Right ventricle myocardium inferior (tissue), 1 donor: ENCODE measurements at regions of chr10 and their contacts with region 1.

Region 1: DNA sequence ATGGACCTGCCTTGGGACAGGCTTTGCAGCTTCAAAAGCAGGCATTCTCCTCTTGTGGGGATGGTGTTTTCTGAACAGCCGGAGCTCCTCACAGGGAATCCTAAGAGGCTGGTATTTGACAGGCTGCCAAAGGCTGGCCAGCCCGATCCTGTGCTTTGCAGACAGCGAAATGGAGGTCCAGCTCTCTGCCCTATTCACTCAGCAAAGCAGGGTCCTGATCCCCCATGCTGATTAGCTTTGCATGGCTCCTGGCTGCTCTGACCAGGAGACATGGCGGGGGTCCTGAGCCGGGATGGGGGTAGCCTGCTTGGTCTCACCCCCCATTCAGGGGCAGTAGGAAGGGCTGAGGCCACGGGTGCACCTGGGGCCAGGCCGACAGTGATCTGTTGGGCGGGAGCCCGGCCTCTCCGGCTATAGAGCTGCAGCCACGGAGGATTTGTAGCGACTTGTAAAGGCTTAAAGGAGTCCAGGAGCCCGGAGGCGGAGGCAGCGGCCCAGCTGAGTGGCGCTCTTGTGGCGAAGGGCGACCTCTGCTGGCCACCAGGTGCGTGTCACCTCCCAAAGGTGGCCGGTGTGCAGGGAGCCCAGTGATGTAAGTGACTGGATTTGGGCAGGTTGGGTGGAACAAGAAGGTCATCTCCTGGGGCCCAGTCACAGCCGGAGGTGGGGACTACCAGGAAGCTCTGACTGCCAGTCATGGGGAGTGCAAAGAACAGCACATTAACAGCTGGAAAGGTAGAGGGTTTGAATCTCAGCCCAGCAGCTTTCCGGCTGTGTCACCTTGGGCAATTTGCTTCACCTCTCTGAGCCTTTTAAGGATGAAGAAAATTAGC is 126.5 kb downstream of the ZMIZ1 start:
- DNase-seq: peak; percentile 93
- ATAC-seq: peak; percentile 78

Region 2: GRCh38 chr10:78211561-78212051 is 983.7 kb before region 1 on chr10:
- intact Hi-C with region 1: loop called (anchors 2 kb)
- DNase-seq: no peak
- ATAC-seq: peak; percentile 2

Region 3: GRCh38 chr10:78664929-78665553 is 530.3 kb before region 1 on chr10:
- intact Hi-C with region 1: loop called (anchors 5 kb)
- DNase-seq: no peak
- ATAC-seq: no peak

Region 4: GRCh38 chr10:78852466-78853240 is 342.7 kb before region 1 on chr10:
- intact Hi-C with region 1: loop called (anchors 5 kb)
- DNase-seq: no peak
- ATAC-seq: no peak

Region 5: GRCh38 chr10:79068562-79069324 is 126.6 kb before region 1 on chr10 and contains the start of gene ZMIZ1:
- intact Hi-C with region 1: loop called (anchors 1 kb)
- DNase-seq: peak; percentile 95
- ATAC-seq: peak; percentile 40
- total RNA-seq, gene ZMIZ1: 48.8 TPM